ENCODE measurements at regions of chr10 and their contacts with region 1.

Region 1: GRCh38 chr10:110007701-110008517 is at the start of gene ADD3:
- DNase-seq: peak; percentile 87
- H3K4me3 Mint-ChIP-seq: no peak within 1 kb of the TSS
- H3K27ac Mint-ChIP-seq: peak within 1 kb of the TSS; percentile 77
- H3K4me1 Mint-ChIP-seq: peaks cover 22% of the 10 kb centered on the region
- H3K27me3 Mint-ChIP-seq: no peaks in the 10 kb centered on the region
- CTCF ChIP-seq: no peak
- total RNA-seq, gene ADD3: 54.9 and 64.4 TPM in 2 replicates

Region 2: DNA sequence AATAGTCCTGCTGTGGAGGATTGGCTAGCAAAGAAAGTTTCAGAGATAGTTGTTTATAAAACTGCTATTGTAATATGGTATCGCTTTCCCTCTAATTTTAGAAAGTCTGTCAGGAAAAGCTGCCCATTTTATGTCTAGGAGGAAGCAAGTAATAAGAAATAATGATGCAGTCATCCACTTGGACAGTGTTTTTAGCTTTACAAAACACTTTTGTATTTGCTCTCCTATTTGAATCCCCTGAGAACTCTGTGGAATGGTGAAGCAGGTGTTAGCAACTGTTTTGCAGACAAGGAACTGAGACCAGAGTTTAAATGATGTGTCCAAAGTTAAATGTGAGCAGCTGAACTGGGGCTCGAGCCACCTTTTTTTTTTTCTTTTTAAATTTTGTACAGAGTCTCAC is 540.4 kb before region 1 on chr10:
- CTCF ChIA-PET with region 1: no interaction called
- intact Hi-C with region 1: no loop called
- DNase-seq: no peak
- H3K4me3 Mint-ChIP-seq: no peak overlapping the region
- H3K27ac Mint-ChIP-seq: no peak overlapping the region
- H3K4me1 Mint-ChIP-seq: no peaks in the 10 kb centered on the region
- H3K27me3 Mint-ChIP-seq: no peaks in the 10 kb centered on the region
- CTCF ChIP-seq: no peak

Region 3: DNA sequence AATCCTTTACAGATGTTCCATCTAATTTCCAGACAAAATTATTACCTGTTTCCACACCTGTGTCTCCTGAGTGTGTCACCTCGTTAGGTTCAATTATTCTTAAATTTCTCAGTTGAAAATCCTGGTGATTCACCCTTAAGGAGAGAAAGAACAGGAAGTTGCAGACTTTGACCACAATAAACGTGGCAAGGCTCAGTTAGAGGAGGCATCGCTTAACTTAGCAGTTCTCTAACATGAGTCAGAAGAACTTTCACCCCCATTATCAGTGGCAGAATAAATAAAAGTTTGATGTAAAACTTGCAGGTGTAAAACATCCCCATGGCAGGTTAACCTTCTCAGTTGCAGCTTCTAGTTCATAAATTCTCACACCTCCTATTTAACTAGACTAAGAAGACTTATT is 92.9 kb before region 1 on chr10:
- CTCF ChIA-PET with region 1: no interaction called
- intact Hi-C with region 1: loop called (anchors 2 kb)
- DNase-seq: peak; percentile 27
- H3K4me3 Mint-ChIP-seq: peak overlapping the region; percentile 27
- H3K27ac Mint-ChIP-seq: peak overlapping the region; percentile 83
- H3K4me1 Mint-ChIP-seq: peaks cover 48% of the 10 kb centered on the region
- H3K27me3 Mint-ChIP-seq: no peaks in the 10 kb centered on the region
- CTCF ChIP-seq: no peak

Region 4: DNA sequence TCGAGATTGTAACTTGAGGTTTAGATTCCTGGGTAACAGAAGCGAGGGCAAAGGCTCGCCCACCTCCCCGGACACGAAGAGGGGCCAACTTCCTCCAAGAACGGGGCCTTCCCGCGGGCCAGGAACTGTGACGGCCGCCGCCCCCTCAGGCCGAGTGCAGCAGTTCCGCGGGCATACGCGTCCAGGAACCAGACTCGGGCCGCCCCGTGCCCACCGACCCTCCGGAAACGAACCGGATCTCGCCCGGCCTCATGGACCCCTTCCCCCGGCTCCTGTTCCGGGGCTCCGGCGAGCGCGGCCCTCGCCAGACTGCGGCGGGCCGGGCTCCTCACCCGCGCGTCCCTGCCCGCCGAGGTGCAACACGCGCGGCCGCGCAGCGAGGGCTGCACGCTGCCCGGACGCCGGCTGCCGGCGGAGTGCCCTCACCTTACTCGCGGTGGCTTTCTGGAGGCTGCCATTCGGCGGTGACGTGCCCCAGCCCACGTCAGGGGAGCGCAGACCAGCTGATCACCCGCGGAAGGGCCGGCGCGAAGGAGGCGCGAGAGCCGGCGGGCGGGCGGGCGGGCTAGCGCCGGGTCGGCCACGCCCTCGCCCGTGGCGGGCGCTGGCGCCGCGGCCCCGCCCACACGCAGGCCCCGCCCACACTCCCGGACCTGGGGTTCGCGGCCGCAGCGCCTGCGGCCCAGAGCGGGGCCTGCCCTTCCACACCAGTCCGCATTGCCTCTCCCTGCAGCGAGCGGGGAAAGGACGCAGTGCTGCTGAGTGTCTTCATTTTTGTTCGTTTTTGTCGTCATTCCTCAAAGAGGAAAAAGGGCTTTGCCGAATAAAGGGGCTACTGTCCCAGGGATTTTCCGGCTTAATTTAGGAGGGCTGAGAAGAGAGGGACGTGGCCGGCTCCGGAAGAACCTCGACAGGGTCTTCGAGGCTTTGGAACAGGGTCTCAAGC is 84.7 kb before region 1 on chr10 and contains the start of gene XPNPEP1:
- CTCF ChIA-PET with region 1: no interaction called
- intact Hi-C with region 1: loop called (anchors 2 kb)
- DNase-seq: peak; percentile 82
- H3K4me3 Mint-ChIP-seq: peak within 1 kb of the TSS; percentile 65
- H3K27ac Mint-ChIP-seq: peak within 1 kb of the TSS; percentile 41
- H3K4me1 Mint-ChIP-seq: peaks cover 24% of the 10 kb centered on the region
- H3K27me3 Mint-ChIP-seq: no peaks in the 10 kb centered on the region
- CTCF ChIP-seq: no peak
- total RNA-seq, gene XPNPEP1: 50.0 and 63.4 TPM in 2 replicates

Region 5: GRCh38 chr10:109966961-109967738 is 40.8 kb before region 1 on chr10:
- CTCF ChIA-PET with region 1: no interaction called
- intact Hi-C with region 1: loop called (anchors 5 kb)
- DNase-seq: peak; percentile 14
- H3K4me3 Mint-ChIP-seq: no peak overlapping the region
- H3K27ac Mint-ChIP-seq: no peak overlapping the region
- H3K4me1 Mint-ChIP-seq: peaks cover 13% of the 10 kb centered on the region
- H3K27me3 Mint-ChIP-seq: no peaks in the 10 kb centered on the region
- CTCF ChIP-seq: no peak

Region 6: GRCh38 chr10:109978481-109978880 is 29.4 kb before region 1 on chr10:
- CTCF ChIA-PET with region 1: no interaction called
- intact Hi-C with region 1: loop called (anchors 2 kb)
- DNase-seq: peak; percentile 41
- H3K4me3 Mint-ChIP-seq: no peak overlapping the region
- H3K27ac Mint-ChIP-seq: no peak overlapping the region
- H3K4me1 Mint-ChIP-seq: peaks cover 31% of the 10 kb centered on the region
- H3K27me3 Mint-ChIP-seq: no peaks in the 10 kb centered on the region
- CTCF ChIP-seq: peak; percentile 35